GM12878 (cell line): ENCODE measurements at regions of chr6 and their contacts with region 1.

Region 1: GRCh38 chr6:2848851-2849250 is 7.2 kb upstream of the SERPINB1 start:
- DNase-seq: no peak
- ATAC-seq: peak; percentile 36
- H3K4me3 ChIP-seq: no peak overlapping the region
- H3K27ac ChIP-seq: no peak overlapping the region
- H3K4me1 ChIP-seq: peaks cover 17% of the 10 kb centered on the region
- H3K27me3 ChIP-seq: no peaks in the 10 kb centered on the region
- CTCF ChIP-seq: no peak
- EP300 ChIP-seq: no peak
- POLR2A ChIP-seq: no peak
- RAD21 ChIP-seq: no peak

Region 2: GRCh38 chr6:2641044-2641725 is 207.7 kb before region 1 on chr6:
- CTCF ChIA-PET with region 1: no interaction called
- POLR2A ChIA-PET with region 1: no interaction called
- RAD21 ChIA-PET with region 1: no interaction called
- SMC1A ChIA-PET with region 1: no interaction called
- in situ Hi-C with region 1: no loop called
- intact Hi-C with region 1: no loop called
- DNase-seq: no peak
- ATAC-seq: no peak
- H3K4me3 ChIP-seq: no peak overlapping the region
- H3K27ac ChIP-seq: no peak overlapping the region
- H3K4me1 ChIP-seq: peaks cover 13% of the 10 kb centered on the region
- H3K27me3 ChIP-seq: peaks cover 3 to 6% of the 10 kb centered on the region in 2 experiments; a peak in 3 of 4 replicates
- CTCF ChIP-seq: no peak
- EP300 ChIP-seq: no peak
- POLR2A ChIP-seq: no peak
- RAD21 ChIP-seq: no peak

Region 3: DNA sequence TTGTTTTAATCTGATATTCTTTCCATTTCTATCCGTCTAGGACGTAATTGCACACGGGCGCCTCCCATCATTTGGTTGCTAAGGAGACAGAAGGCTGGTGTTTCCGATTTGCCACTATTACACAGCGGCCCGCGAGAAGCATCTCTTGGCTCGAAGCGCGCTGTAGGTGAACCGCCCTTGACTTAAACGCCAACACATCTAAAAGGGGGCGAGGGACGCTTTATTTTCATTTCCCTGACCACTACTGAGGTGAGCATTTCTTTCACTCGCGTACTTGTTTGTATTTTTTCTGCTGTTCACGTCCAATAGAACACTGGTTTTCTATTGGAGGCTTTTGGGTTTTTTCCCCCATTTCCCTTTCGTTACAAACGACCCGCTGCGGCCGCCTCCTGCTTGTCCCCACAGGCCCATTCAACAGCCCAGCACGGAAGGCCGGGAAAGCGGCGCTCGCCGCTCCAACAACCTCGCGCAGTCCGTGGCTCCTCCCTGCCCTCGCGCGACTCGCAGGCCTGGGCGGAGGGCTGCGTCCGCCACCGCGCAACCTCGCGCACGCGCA is 84.2 kb before region 1 on chr6:
- CTCF ChIA-PET with region 1: interaction called, 15 read pairs
- POLR2A ChIA-PET with region 1: no interaction called
- RAD21 ChIA-PET with region 1: interaction called, 5 read pairs
- SMC1A ChIA-PET with region 1: interaction called, 14 read pairs
- in situ Hi-C with region 1: no loop called
- intact Hi-C with region 1: no loop called
- DNase-seq: no peak
- ATAC-seq: peak; percentile 83
- H3K4me3 ChIP-seq: peak overlapping the region; percentile 69
- H3K27ac ChIP-seq: peak overlapping the region; percentile 54
- H3K4me1 ChIP-seq: peaks cover 8% of the 10 kb centered on the region
- H3K27me3 ChIP-seq: peaks cover 0 to 3% of the 10 kb centered on the region in 2 experiments; a peak in 2 of 4 replicates
- CTCF ChIP-seq: no peak
- EP300 ChIP-seq: no peak
- POLR2A ChIP-seq: peak; percentile 85
- RAD21 ChIP-seq: no peak

Region 4: GRCh38 chr6:2862712-2863181 is 13.9 kb after region 1 on chr6:
- CTCF ChIA-PET with region 1: interaction called, 57 read pairs
- POLR2A ChIA-PET with region 1: interaction called, 108 read pairs
- RAD21 ChIA-PET with region 1: interaction called, 92 read pairs
- SMC1A ChIA-PET with region 1: interaction called, 79 read pairs
- in situ Hi-C with region 1: no loop called
- intact Hi-C with region 1: loop called (anchors 2 kb)
- DNase-seq: peak; percentile 93
- ATAC-seq: peak; percentile 67
- H3K4me3 ChIP-seq: no peak overlapping the region
- H3K27ac ChIP-seq: peak overlapping the region; percentile 86
- H3K4me1 ChIP-seq: peaks cover 67% of the 10 kb centered on the region
- H3K27me3 ChIP-seq: no peaks in the 10 kb centered on the region
- CTCF ChIP-seq: no peak
- EP300 ChIP-seq: peak; percentile 91 to 98
- POLR2A ChIP-seq: no peak
- RAD21 ChIP-seq: no peak

Region 5: DNA sequence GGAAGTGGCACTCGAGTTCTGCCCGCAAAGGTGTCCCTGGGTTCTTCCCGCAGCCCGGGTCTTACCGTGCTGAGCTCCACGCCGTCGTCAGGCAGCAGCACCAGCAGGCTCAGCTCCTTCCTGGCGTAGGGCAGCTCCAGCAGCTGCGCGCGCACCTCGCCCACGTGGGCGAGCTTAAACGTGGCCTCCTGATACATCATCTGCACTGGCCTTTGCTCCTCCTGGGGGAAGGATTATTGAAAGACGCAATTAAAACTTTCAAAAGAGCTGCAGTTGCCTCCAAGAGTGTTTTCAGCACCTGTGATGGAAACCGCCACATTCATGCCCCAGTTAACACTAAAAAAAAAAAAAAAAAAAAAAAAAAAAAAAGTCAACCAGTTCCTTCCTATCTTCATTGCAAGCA is 42.9 kb after region 1 on chr6:
- CTCF ChIA-PET with region 1: interaction called, 37 read pairs
- POLR2A ChIA-PET with region 1: interaction called, 26 read pairs
- RAD21 ChIA-PET with region 1: interaction called, 54 read pairs
- SMC1A ChIA-PET with region 1: interaction called, 103 read pairs
- in situ Hi-C with region 1: no loop called
- intact Hi-C with region 1: no loop called
- DNase-seq: peak; percentile 89
- ATAC-seq: peak; percentile 93
- H3K4me3 ChIP-seq: peak overlapping the region; percentile 20; the same call in 1 of the 2 replicates
- H3K27ac ChIP-seq: no peak overlapping the region
- H3K4me1 ChIP-seq: peaks cover 4% of the 10 kb centered on the region; the same call in 1 of the 2 replicates
- H3K27me3 ChIP-seq: no peaks in the 10 kb centered on the region
- CTCF ChIP-seq: no peak
- EP300 ChIP-seq: peak; percentile 18 to 76; a peak in 1 of 4 replicates
- POLR2A ChIP-seq: peak; percentile 85
- RAD21 ChIP-seq: no peak

Region 6: DNA sequence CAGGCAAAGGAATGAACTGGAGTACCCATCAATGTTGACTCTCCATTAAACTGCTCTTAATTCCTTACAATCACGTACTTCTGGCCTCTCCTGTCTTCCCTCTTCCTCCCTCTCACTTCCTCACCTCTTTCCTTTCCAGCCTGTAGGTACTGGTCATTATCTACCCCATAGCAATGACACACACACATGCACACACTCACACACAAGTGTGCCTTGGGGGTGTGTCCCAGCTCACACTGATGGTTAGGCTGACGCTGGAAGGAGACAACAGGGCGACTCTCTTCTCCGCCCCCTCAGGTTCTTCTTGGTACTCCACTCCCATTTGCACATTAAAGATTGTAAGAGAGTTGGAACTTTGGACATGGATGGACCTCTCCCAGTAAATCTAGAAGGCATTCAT is 68.2 kb after region 1 on chr6:
- CTCF ChIA-PET with region 1: interaction called, 143 read pairs
- POLR2A ChIA-PET with region 1: interaction called, 7 read pairs
- RAD21 ChIA-PET with region 1: interaction called, 88 read pairs
- SMC1A ChIA-PET with region 1: interaction called, 136 read pairs
- in situ Hi-C with region 1: loop called (anchors 10 kb)
- intact Hi-C with region 1: no loop called
- DNase-seq: no peak
- ATAC-seq: peak; percentile 71
- H3K4me3 ChIP-seq: no peak overlapping the region
- H3K27ac ChIP-seq: no peak overlapping the region
- H3K4me1 ChIP-seq: no peaks in the 10 kb centered on the region
- H3K27me3 ChIP-seq: peaks cover 0 to 5% of the 10 kb centered on the region in 2 experiments; a peak in 1 of 4 replicates
- CTCF ChIP-seq: 0 out of 6 replicates have a peak, but pooled peaks of 1 of the 3 experiments have one; percentile 16
- EP300 ChIP-seq: no peak
- POLR2A ChIP-seq: no peak
- RAD21 ChIP-seq: no peak

Region 7: DNA sequence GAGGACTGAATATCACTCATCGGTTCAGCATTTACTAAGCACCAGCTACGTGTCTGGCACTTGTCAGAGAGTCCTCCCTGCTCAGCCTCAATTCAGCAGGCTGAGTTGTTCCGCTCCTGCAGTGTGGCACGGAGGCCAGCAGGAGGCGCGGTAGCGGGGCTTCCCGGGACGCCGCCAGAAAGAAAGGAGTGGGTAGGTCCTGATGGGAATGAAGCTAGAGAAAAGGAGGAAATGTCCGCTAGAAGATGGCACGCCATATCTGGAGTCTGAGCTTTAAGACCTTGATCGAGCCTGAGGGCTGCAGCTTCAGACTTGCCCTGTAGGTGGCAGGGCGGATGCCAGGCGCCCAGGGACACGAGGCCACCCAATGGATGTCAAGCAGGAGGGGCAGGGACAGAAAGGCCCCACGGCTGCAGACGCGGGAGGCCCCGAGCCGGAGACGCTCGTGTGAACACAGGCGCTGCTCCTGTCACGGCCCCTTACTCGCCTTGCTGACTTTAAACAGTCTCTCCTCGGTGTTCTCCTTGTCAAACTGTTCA is 103.8 kb after region 1 on chr6:
- CTCF ChIA-PET with region 1: interaction called, 10 read pairs
- POLR2A ChIA-PET with region 1: no interaction called
- RAD21 ChIA-PET with region 1: interaction called, 4 read pairs
- SMC1A ChIA-PET with region 1: interaction called, 8 read pairs
- in situ Hi-C with region 1: no loop called
- intact Hi-C with region 1: no loop called
- DNase-seq: no peak
- ATAC-seq: peak; percentile 99
- H3K4me3 ChIP-seq: no peak overlapping the region
- H3K27ac ChIP-seq: no peak overlapping the region
- H3K4me1 ChIP-seq: no peaks in the 10 kb centered on the region
- H3K27me3 ChIP-seq: peaks cover 4 to 6% of the 10 kb centered on the region in 2 experiments
- CTCF ChIP-seq: peak; percentile 52 to 83 (median 80)
- EP300 ChIP-seq: no peak
- POLR2A ChIP-seq: no peak
- RAD21 ChIP-seq: no peak

Region 8: DNA sequence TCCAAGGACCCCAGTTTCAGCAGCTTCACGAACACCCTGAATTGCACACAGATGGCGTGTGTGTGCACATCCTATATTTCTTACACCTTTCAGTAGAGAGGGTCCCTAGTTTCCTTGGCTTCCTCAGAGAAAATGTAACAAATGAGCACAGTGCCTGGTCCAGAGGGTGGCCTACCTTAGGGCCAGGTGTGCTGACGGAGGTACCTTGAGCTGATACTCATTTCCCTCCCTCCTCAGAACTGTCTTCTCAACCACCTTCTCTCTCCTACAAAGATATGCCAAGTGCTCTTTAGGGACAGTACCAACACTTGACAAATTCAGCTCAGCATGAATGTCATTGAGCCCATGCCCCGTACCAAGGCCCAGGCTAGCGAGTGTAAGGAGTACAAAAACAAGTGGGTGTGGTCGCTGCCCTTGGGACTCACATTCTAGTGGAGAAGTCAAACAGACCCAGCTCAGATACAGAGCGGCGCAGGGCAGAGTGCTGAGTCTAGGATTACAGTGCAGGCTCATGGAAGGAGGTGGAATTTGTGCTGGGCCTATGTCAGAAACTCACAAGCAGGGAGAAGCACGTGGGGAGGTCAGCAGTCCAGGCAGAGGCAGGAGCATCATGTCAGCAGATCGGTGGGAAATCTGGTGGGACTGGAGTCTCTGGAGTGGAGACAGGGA is 260.0 kb after region 1 on chr6:
- CTCF ChIA-PET with region 1: no interaction called
- POLR2A ChIA-PET with region 1: no interaction called
- RAD21 ChIA-PET with region 1: no interaction called
- SMC1A ChIA-PET with region 1: no interaction called
- in situ Hi-C with region 1: no loop called
- intact Hi-C with region 1: no loop called
- DNase-seq: no peak
- ATAC-seq: no peak
- H3K4me3 ChIP-seq: no peak overlapping the region
- H3K27ac ChIP-seq: no peak overlapping the region
- H3K4me1 ChIP-seq: no peaks in the 10 kb centered on the region
- H3K27me3 ChIP-seq: no peaks in the 10 kb centered on the region
- CTCF ChIP-seq: no peak
- EP300 ChIP-seq: no peak
- POLR2A ChIP-seq: no peak
- RAD21 ChIP-seq: no peak